ENCODE measurements at regions of chr5 and their contacts with region 1.

Region 1: DNA sequence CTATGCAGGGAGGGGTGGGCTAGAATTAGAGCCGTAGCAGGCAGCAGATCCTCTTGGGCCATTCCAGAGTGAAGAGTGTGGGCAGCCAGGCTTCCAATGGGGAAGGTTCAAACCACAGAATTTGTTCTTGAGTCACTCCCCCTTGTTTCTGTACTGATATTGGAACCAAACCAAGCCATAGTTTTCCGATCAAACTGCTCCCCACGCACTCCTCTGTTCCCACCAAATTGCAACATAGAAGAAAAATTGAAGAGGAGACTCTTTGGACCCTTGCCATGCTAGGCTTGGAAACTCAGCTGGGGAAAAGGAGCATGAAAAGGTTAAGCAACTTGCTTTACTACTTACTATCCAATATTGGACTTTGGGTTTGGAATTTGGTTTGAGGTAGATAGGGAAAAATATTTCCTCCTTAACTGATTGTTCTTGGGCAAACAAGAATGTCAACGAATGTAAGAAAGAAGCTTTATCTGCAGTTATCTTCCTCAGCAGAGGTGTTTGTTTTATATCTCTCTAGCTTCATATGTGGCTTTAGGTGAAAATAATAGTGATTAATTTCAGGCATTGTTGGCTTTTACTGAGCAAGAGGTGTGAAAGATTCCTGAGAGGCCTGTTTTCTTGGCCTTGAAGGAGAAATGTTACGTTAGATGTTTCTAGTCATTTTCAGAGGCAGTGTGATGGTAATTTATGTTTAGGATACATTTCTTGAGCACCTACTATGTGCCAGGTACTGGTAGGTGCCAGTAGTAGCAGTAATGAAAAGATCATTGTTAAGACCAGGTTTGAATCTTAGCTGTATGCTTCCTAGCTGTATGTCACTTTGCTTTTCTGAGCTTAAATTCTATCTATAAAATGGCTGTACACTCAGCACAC is 166.0 kb upstream of the NR3C1 start:
- DNase-seq: peak; percentile 52 to 60
- H3K4me3 ChIP-seq: no peak overlapping the region
- H3K4me3 Mint-ChIP-seq: peak overlapping the region; percentile 49
- H3K27ac Mint-ChIP-seq: peak overlapping the region; percentile 89
- H3K4me1 ChIP-seq: peaks cover 33% of the 10 kb centered on the region
- H3K4me1 Mint-ChIP-seq: peaks cover 36% of the 10 kb centered on the region
- H3K27me3 ChIP-seq: no peaks in the 10 kb centered on the region
- H3K27me3 Mint-ChIP-seq: no peaks in the 10 kb centered on the region
- CTCF ChIP-seq: no peak

Region 2: DNA sequence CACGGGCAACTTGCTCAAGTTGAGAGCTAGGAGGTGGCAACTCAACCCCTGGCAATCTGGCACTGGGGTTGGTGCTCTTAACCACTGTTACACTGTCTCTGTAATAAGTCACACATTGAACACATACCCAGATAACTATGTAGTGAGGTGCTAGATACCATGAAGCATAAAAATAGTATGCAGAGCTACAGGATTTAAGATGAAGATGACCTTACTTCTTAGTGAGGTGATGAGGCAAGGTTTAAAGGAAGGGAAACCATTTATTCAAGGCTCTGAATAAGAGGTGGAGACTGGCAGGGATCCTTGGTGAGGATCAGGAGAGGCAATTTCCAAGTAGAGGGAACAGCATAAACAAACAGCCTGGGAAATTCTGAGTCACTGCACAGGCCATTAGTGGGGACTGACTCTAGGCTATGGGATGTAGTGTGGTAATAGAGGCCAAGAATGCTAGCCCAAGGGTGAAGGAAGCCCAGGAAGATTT is 98.4 kb before region 1 on chr5:
- CTCF ChIA-PET with region 1: no interaction called
- POLR2A ChIA-PET with region 1: no interaction called
- intact Hi-C with region 1: no loop called
- DNase-seq: no peak
- H3K4me3 ChIP-seq: no peak overlapping the region
- H3K4me3 Mint-ChIP-seq: no peak overlapping the region
- H3K27ac Mint-ChIP-seq: no peak overlapping the region
- H3K4me1 ChIP-seq: no peaks in the 10 kb centered on the region
- H3K4me1 Mint-ChIP-seq: no peaks in the 10 kb centered on the region
- H3K27me3 ChIP-seq: no peaks in the 10 kb centered on the region
- H3K27me3 Mint-ChIP-seq: no peaks in the 10 kb centered on the region
- CTCF ChIP-seq: no peak

Region 3: GRCh38 chr5:143554918-143555519 is 14.4 kb before region 1 on chr5:
- CTCF ChIA-PET with region 1: no interaction called
- POLR2A ChIA-PET with region 1: no interaction called
- intact Hi-C with region 1: loop called (anchors 1 kb)
- DNase-seq: peak; percentile 53 to 64
- H3K4me3 ChIP-seq: no peak overlapping the region
- H3K4me3 Mint-ChIP-seq: no peak overlapping the region
- H3K27ac Mint-ChIP-seq: peak overlapping the region; percentile 79
- H3K4me1 ChIP-seq: peaks cover 15% of the 10 kb centered on the region
- H3K4me1 Mint-ChIP-seq: peaks cover 20% of the 10 kb centered on the region
- H3K27me3 ChIP-seq: no peaks in the 10 kb centered on the region
- H3K27me3 Mint-ChIP-seq: no peaks in the 10 kb centered on the region
- CTCF ChIP-seq: no peak

Region 4: DNA sequence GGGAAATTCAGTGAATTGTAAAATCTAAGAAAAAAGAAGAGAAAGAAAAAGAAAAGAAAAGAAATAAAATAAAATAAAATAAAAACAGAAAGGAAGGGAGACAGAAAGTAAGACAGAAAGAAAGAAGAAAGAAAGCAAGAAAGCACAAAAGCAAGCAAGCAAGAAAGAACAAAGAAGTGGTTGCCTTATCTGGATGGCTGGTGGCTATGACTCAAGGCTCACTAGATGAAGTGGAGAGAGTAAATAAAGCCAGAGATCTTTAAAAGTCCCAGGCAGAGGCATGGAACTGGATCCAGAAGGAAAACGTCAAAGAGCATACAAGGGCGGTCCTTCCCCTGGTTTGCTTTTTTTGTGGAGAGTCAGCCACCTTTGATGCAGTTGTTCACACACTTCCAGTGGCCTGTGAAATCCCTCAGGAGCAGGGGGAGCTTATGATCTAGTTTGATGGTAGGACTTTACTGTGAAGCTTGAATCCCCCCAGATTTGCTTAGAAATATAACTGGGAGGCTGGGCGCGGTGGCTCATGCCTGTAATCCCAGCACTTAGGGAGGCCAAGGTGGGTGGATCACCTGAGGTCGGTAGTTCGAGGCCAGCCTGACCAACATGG is 65.8 kb after region 1 on chr5:
- CTCF ChIA-PET with region 1: interaction called, 8 read pairs
- POLR2A ChIA-PET with region 1: no interaction called
- intact Hi-C with region 1: loop called (anchors 5 kb)
- DNase-seq: peak; percentile 20 to 46
- H3K4me3 ChIP-seq: no peak overlapping the region
- H3K4me3 Mint-ChIP-seq: no peak overlapping the region
- H3K27ac Mint-ChIP-seq: peak overlapping the region; percentile 28
- H3K4me1 ChIP-seq: peaks cover 54% of the 10 kb centered on the region
- H3K4me1 Mint-ChIP-seq: peaks cover 57% of the 10 kb centered on the region
- H3K27me3 ChIP-seq: no peaks in the 10 kb centered on the region
- H3K27me3 Mint-ChIP-seq: no peaks in the 10 kb centered on the region
- CTCF ChIP-seq: no peak

Region 5: DNA sequence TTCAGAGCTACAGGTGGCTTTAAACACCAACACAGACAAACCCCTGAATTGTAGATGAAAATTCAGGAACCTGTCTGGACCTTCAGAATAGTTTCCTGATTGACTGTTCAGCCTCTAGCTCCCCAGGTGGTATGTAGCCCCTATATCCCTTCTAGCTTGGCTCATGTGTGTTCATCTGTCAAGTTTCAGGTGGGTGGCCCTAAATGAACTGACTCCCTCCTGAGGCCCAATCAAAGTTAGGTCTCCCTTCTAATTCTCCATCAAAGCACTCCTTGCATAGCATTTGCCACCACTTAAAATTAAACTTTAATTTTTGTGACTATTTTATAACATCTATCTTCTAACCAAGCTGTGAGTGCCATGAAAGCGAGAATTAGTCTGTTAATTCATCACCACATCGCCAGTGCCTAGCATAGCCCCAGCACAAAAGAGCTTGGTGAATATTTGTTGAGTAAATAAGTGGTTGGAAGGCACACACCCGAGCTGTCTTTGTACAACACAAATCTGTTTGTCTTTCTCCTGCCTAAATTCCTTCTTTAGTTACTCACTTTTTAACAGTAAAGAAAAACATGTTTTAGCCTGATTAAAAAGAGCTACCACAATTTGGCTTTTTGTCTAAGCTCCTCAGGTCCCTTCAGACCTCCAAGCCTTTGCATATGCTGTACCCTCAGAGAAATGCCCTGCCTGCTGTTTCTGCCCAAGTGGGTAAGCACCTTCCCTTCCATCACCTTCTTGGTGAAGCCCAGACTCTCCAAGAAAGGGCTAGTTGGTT is 104.4 kb after region 1 on chr5:
- CTCF ChIA-PET with region 1: no interaction called
- POLR2A ChIA-PET with region 1: no interaction called
- intact Hi-C with region 1: loop called (anchors 5 kb)
- DNase-seq: peak in 1 of 2 experiments; percentile 35
- H3K4me3 ChIP-seq: no peak overlapping the region
- H3K4me3 Mint-ChIP-seq: peak overlapping the region; percentile 27
- H3K27ac Mint-ChIP-seq: peak overlapping the region; percentile 91
- H3K4me1 ChIP-seq: peaks cover 40% of the 10 kb centered on the region
- H3K4me1 Mint-ChIP-seq: peaks cover 46% of the 10 kb centered on the region
- H3K27me3 ChIP-seq: no peaks in the 10 kb centered on the region
- H3K27me3 Mint-ChIP-seq: no peaks in the 10 kb centered on the region
- CTCF ChIP-seq: no peak

Measured in Caco-2 (cell line).